ENCODE measurements at regions of chr17 and their contacts with region 1.

Region 1: DNA sequence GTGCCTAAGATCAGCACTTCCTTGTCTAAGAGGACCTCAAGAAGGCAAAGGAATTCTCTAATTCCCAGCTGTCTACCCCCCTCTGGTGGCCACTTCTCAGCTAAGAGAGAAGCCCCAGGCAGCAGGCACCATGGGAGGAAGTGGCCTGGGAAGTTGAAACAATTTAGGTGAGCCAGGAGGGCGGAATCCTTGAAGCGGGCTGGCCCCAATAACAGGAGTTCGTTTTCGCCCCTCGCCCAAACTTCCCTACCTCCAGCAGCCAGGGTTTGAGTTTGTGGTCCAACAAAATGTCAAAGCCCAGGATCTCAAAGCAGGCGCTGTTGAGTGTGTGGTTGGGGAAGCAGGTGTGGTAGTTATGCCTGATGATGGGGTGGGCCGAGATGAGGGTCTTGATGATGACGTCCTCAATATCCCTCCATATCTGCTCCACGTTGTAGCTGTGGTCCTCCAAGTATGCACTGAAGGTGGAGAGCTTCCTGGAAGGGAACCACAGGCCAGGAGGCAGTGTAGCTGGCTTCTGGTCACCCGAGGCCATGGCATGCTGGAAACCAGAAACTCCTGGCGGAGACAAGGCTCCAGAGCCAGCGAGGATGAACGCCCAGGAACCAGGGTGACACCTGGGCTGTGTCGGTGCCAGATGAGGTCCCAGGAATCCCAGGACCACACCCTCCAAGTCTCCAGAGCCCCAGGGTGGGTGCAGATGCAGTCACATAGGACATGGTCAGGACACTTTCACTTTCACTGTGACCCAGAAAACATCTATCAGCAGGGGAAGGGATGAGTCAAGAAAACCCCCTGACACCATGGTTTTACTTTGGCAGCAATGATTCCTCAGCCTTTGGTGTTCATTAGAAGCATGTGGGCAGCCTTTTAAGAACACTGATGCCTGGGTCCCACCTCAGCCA is 25.6 kb downstream of the TTLL6 start:
- DNase-seq: peak; percentile 70 to 84
- H3K4me3 ChIP-seq: no peak overlapping the region
- H3K27ac ChIP-seq: no peak overlapping the region
- H3K4me1 ChIP-seq: no peaks in the 10 kb centered on the region
- H3K27me3 ChIP-seq: peaks cover 18% of the 10 kb centered on the region; the same call in 1 of the 2 replicates
- CTCF ChIP-seq: peak; percentile 92

Region 2: DNA sequence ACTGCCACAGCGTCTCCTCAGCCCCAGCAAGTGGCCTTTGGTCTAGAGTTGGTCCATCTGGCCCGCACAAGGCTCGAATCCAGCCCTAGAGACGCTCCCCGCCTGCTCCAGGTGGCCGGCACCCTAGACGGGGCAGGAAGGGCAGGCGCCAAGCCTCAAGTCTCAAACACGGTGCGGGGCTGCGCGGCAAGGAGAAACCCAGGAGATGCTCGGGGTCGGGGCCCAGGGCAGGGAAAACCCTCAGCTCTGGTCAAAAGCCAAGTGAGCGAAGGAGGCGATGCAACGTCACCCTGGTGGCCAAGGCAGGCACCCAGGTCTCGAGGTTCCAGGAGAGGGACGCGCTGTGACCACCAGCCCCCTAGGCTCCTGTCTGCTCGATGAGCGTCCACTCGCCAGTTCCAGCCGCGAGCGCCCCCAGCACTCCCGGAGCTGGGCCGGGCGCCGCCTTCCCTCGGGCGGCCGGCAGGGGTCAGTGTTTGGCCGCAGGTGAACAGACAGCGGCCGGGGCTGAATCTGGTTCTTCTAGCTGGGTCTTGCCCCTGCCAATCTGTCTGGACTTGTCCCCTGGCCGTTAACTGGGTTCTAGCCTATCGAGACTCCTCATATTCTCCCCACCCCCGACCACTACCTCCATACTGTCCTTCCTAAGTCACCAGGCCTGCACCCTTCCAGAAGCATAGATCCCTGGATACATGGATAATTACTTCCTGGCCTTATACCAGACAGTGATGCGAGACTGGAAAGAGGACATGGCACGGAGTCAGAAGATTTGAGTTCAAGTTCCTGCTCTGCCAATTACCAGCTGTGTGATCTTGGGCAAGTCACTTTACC is 113.0 kb before region 1 on chr17:
- CTCF ChIA-PET with region 1: no interaction called
- POLR2A ChIA-PET with region 1: no interaction called
- intact Hi-C with region 1: loop called (anchors 2 kb)
- DNase-seq: peak; percentile 41 to 64
- H3K4me3 ChIP-seq: no peak overlapping the region; the same call in 1 of the 2 replicates
- H3K27ac ChIP-seq: no peak overlapping the region
- H3K4me1 ChIP-seq: 0 out of 2 replicates have a peak, but pooled peaks cover 4% of the 10 kb centered on the region
- H3K27me3 ChIP-seq: peaks cover 36% of the 10 kb centered on the region
- CTCF ChIP-seq: peak; percentile 97

Region 3: DNA sequence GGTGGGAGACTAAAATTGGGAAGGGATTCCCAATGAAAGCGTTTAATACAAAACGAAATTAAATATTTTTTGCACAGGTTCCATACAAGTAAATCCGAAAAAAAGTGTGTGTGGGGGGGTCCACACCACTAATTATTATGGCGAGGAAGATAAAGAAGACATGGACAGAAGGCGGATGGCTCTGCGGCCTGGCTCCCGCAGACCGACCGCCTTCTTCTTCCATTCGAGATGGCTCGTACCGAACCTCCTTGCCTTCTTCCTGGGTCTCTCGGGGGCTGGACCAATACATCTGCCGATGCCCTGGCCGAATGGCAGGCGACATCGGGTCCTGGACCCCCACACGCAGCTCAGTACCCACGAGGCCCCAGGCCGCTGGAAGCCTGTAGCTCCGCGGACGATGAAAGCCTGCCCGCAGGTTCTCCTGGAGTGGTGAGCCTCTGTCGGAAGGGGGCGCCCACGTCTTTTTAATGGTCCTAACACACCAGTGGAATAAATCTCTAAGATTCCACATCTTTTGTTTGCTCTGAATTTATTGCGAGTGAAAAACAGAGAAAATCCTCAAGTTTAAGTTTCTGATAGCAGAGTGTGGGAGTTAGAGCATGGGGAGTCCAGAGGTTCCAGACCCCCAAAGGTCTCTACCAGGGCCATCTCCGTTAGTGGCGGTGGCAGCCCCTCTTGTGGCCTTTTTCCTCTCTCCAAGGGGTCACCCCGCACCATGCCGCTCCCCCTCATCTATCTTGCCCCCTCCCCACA is 67.0 kb before region 1 on chr17:
- CTCF ChIA-PET with region 1: interaction called, 17 read pairs
- POLR2A ChIA-PET with region 1: no interaction called
- intact Hi-C with region 1: loop called (anchors 1 kb)
- DNase-seq: peak; percentile 50 to 63
- H3K4me3 ChIP-seq: no peak overlapping the region
- H3K27ac ChIP-seq: no peak overlapping the region
- H3K4me1 ChIP-seq: no peaks in the 10 kb centered on the region
- H3K27me3 ChIP-seq: peaks cover 72% of the 10 kb centered on the region
- CTCF ChIP-seq: peak; percentile 89

Region 4: GRCh38 chr17:49755663-49756283 is 964.4 kb after region 1 on chr17:
- CTCF ChIA-PET with region 1: interaction called, 13 read pairs
- POLR2A ChIA-PET with region 1: no interaction called
- intact Hi-C with region 1: no loop called
- DNase-seq: no peak
- H3K4me3 ChIP-seq: no peak overlapping the region
- H3K27ac ChIP-seq: no peak overlapping the region
- H3K4me1 ChIP-seq: no peaks in the 10 kb centered on the region
- H3K27me3 ChIP-seq: no peaks in the 10 kb centered on the region
- CTCF ChIP-seq: no peak

Measured in PC-9 (cell line).